Activated B cell treated with CpG ODN at 0.5 μM for 24 hours (primary cell): ENCODE measurements at regions of chr14 and their contacts with region 1.

Region 1: GRCh38 chr14:59028476-59029202 is 159.8 kb upstream of the DAAM1 start:
- DNase-seq: no peak
- ATAC-seq: no peak
- H3K4me3 Mint-ChIP-seq: no peak overlapping the region
- H3K27ac Mint-ChIP-seq: no peak overlapping the region
- H3K4me1 Mint-ChIP-seq: peaks cover 6% of the 10 kb centered on the region
- H3K27me3 Mint-ChIP-seq: peaks cover 11% of the 10 kb centered on the region
- CTCF ChIP-seq: no peak

Region 2: DNA sequence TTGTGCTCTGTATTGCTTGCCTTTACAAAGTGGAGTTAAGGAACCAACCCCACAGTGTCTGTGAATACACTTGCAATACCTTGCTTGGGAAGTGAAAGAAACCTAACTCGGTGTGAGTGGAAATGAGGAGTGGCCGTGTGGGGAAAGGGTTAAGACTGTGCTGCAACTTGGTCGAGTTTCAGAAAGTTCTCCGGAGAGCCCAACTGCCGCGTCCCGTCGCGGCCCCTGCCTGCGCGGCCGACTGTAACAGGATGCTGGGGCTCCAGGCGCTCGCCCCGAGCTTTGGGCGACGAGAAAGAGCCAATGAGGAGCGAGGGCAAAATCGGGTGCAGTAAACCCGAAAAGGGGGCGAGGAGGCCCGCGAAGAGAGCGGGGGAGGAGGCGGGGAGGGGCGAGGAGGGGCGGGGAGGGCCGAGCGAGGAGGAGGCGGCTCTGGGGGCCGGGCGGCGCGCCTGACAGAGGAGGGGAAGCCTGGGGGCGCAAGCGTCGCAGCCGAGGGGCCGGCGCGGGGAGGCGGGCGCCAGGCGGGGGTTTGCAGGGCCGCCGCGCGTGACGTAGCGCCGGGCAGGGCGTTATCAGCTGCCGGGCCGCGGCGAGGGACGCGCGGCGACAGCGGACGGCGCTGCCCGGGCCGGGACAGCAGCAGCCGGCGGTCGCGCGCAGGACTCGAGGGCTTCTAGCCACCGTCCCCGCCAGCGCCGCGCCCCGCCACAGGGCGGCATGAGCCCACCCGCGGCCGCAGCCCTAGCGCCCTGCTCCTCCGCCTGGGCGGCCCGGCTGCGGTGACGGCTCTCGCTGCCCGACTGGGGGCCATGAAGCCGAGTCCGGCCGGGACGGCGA is 391.0 kb before region 1 on chr14 and contains the start of gene DACT1:
- CTCF ChIA-PET with region 1: no interaction called
- POLR2A ChIA-PET with region 1: no interaction called
- intact Hi-C with region 1: loop called (anchors 5 kb)
- DNase-seq: peak; percentile 52
- ATAC-seq: peak; percentile 80
- H3K4me3 Mint-ChIP-seq: peak within 1 kb of the TSS; percentile 94
- H3K27ac Mint-ChIP-seq: peak within 1 kb of the TSS; percentile 90
- H3K4me1 Mint-ChIP-seq: peaks cover 46% of the 10 kb centered on the region
- H3K27me3 Mint-ChIP-seq: peaks cover 17% of the 10 kb centered on the region
- CTCF ChIP-seq: no peak
- total RNA-seq, gene DACT1: 3.0 and 3.5 TPM in 2 replicates

Region 3: GRCh38 chr14:58994130-58994529 is 34.5 kb before region 1 on chr14:
- CTCF ChIA-PET with region 1: no interaction called
- POLR2A ChIA-PET with region 1: no interaction called
- intact Hi-C with region 1: no loop called
- DNase-seq: no peak
- ATAC-seq: no peak
- H3K4me3 Mint-ChIP-seq: no peak overlapping the region
- H3K27ac Mint-ChIP-seq: no peak overlapping the region
- H3K4me1 Mint-ChIP-seq: no peaks in the 10 kb centered on the region
- H3K27me3 Mint-ChIP-seq: peaks cover under 1% of the 10 kb centered on the region
- CTCF ChIP-seq: no peak

Region 4: GRCh38 chr14:59093902-59094301 is 65.3 kb after region 1 on chr14:
- CTCF ChIA-PET with region 1: no interaction called
- POLR2A ChIA-PET with region 1: no interaction called
- intact Hi-C with region 1: no loop called
- DNase-seq: no peak
- ATAC-seq: no peak
- H3K4me3 Mint-ChIP-seq: no peak overlapping the region
- H3K27ac Mint-ChIP-seq: no peak overlapping the region
- H3K4me1 Mint-ChIP-seq: no peaks in the 10 kb centered on the region
- H3K27me3 Mint-ChIP-seq: peaks cover 15% of the 10 kb centered on the region
- CTCF ChIP-seq: no peak

Region 5: DNA sequence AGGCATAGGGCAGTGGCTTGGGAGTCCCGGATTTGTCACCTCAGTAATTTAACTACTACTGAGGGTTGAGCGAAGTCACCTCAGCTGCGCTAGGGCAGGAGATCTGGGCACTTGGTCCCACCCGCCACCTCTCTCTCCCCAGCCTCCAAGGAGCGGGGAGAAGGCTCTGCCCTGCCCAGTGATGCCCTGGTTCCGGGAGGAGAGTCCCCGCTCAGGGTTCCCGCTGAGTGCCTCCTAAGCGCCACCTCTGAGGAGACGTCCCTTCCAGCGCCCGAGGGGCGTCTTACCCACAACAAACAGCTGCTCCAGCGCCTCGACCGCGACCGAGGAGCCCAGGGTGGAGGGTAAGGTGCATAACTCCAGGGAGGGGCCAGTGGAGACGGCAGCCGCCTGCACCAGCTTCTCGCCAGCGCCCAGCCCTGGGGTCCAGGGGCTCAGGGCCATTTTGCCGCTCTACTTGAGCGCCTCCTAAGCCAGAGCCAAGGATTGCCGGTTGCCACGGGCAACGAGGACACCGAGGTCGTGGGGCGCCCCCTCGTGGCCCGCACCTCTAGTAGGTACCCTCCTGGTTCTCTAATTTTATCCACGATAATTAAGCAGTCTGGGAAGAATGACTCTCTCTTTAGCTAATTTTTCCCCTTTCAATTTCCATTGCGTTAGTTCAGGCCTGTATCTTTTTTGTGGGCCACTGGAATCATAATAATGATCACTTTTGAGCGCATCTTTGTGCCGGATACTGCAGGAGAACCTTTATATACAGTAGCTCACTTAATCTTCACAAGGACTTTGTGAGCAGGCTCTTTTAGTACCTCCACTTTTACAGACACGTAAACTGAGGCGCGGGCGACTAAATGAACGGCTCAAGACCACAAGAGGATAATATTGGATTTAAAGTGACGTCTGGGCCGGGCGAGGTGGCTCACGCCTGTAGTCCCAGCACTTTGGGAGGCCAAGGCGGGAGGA is 548.0 kb after region 1 on chr14 and contains the start of gene CCDC175:
- CTCF ChIA-PET with region 1: no interaction called
- POLR2A ChIA-PET with region 1: no interaction called
- intact Hi-C with region 1: loop called (anchors 2 kb)
- DNase-seq: peak; percentile 68
- ATAC-seq: peak; percentile 94
- H3K4me3 Mint-ChIP-seq: peak within 1 kb of the TSS; percentile 70
- H3K27ac Mint-ChIP-seq: no peak within 1 kb of the TSS
- H3K4me1 Mint-ChIP-seq: peaks cover 8% of the 10 kb centered on the region
- H3K27me3 Mint-ChIP-seq: peaks cover 11% of the 10 kb centered on the region
- CTCF ChIP-seq: no peak
- total RNA-seq, gene CCDC175: not detected in 2 replicates

Region 6: DNA sequence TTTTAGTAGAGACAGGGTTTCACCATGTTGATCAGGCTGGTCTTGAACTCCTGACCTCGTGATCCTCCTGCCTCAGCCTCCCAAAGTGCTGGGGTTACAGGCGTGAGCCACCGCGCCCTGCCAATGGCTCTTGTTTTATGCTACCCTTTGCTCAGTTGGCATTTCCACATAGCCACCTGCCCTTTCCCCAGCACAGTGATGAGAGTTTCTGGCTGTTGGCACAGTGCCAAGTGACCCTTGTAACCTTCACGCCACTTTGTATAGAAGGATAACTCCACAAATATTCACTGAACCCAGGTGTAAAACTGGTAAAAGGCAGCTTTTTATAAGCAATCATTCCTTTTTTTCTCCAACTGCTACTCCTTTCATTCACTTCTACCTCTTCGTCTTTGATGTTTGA is 566.4 kb after region 1 on chr14:
- CTCF ChIA-PET with region 1: no interaction called
- POLR2A ChIA-PET with region 1: no interaction called
- intact Hi-C with region 1: no loop called
- DNase-seq: no peak
- ATAC-seq: no peak
- H3K4me3 Mint-ChIP-seq: no peak overlapping the region
- H3K27ac Mint-ChIP-seq: no peak overlapping the region
- H3K4me1 Mint-ChIP-seq: no peaks in the 10 kb centered on the region
- H3K27me3 Mint-ChIP-seq: peaks cover 14% of the 10 kb centered on the region
- CTCF ChIP-seq: no peak